ENCODE measurements at regions of chr1 and their contacts with region 1.

Region 1: DNA sequence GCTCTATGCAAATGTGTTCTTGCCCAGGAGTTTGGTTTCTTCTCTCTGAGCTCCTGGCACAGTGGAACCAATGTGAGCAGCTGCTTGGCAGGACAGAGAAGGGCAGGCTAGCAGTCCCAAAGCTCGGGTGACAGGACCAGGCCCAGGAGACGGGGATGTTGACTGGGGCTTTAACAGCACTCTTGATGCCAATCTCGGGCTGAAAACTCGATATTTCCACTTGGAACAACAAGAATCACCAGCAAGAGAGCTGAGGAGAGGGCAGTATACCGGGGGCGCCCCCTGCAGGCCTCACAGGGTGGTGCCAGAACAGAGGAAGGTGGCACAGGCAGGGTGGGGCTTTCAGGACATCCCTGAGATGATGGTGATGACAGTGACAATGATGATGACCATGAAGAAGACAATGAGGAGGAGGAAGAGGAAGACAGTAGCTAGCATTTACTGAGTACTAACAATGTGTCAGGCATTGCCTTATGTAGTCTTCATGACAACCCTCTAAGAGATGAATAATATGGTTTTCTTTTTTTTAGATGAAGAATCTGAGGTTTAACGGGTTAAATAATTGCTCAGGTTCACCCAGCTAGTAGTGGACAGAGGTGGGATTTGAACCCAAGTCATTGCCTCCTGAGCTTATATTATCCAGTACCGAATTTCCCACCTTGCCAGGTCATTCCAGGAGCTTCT is 2.7 kb upstream of the KCNJ9 start:
- DNase-seq: peak; percentile 71
- H3K4me3 Mint-ChIP-seq: no peak overlapping the region
- H3K27ac Mint-ChIP-seq: no peak overlapping the region
- H3K4me1 Mint-ChIP-seq: no peaks in the 10 kb centered on the region
- H3K27me3 Mint-ChIP-seq: peaks cover 63% of the 10 kb centered on the region

Region 2: GRCh38 chr1:160058087-160058486 is 20.6 kb before region 1 on chr1:
- CTCF ChIA-PET with region 1: interaction called, 30 read pairs
- POLR2A ChIA-PET with region 1: no interaction called
- DNase-seq: no peak
- H3K4me3 Mint-ChIP-seq: no peak overlapping the region
- H3K27ac Mint-ChIP-seq: no peak overlapping the region
- H3K4me1 Mint-ChIP-seq: no peaks in the 10 kb centered on the region
- H3K27me3 Mint-ChIP-seq: peaks cover 38% of the 10 kb centered on the region

Region 3: DNA sequence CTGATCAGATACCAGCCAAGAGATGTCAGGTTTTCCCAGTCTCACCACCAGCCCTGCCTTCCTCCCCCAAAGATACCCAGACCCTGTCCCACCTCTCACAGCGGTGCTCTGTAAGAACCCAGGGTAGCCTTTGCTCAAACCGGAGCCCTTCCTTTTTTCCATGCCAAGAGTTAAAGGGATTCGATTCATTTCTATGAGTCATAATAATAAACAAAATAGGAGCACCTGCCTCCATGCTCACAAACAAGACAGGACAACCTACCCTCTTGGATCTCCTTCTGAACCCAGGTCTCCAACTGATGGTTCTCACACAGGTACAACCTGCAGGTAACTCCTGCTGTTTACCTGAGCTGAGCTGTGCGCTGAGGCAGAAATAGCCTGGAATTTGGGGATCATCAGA is 31.0 kb after region 1 on chr1:
- CTCF ChIA-PET with region 1: no interaction called
- POLR2A ChIA-PET with region 1: no interaction called
- DNase-seq: no peak
- H3K4me3 Mint-ChIP-seq: no peak overlapping the region
- H3K27ac Mint-ChIP-seq: no peak overlapping the region
- H3K4me1 Mint-ChIP-seq: no peaks in the 10 kb centered on the region
- H3K27me3 Mint-ChIP-seq: peaks cover 17% of the 10 kb centered on the region